ENCODE measurements at regions of chr3 and their contacts with region 1.

Region 1: GRCh38 chr3:141460097-141460704 is 26.6 kb upstream of the RASA2 start:
- DNase-seq: peak; percentile 91
- ATAC-seq: peak; percentile 98

Region 2: GRCh38 chr3:140842984-140843649 is 617.1 kb before region 1 on chr3:
- intact Hi-C with region 1: no loop called
- DNase-seq: no peak
- ATAC-seq: no peak

Region 3: GRCh38 chr3:141020143-141020830 is 439.9 kb before region 1 on chr3:
- intact Hi-C with region 1: no loop called
- DNase-seq: no peak
- ATAC-seq: no peak

Region 4: GRCh38 chr3:141311496-141312353 is 148.5 kb before region 1 on chr3:
- intact Hi-C with region 1: loop called (anchors 2 kb)
- DNase-seq: peak; percentile 99
- ATAC-seq: peak; percentile 99

Region 5: DNA sequence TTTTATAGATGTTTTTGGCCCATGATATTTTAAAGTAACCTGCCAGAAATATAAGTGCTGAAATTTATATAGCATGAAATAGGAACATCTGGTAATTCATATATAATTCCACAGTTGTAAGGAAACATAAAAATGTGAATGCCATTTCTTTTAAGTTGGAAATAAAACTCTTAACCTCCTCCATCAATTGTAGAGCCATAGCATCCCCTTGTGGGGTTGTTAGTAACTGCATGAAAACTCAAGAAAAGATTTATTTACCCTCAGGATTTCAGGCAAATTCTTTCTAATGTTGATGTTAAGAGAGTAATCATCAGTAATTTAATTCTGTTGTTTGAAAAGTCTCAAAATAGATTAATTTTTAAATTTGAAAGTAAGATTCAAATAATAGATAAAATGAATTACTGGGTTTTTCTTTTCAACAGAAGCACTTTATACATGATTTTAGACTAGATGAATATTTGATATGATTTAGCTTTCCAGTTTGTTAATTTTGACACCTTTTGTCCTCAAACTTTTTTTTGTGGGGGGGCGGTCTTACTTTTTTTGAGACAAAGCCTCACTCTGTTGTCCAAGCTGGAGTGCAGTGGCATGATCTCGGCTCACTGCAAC is 101.3 kb after region 1 on chr3:
- intact Hi-C with region 1: loop called (anchors 5 kb)
- DNase-seq: no peak
- ATAC-seq: peak; percentile 45